Activated T-helper 1 cell treated with anti-CD3 and anti-CD28 coated beads, Interleukin-12 subunit alpha, Interleukin-12 subunit beta, Interleukin-2, Interleukin-4 antibody, amounts not matched to agents 30 ng/mL and 10 ng/mL and 1 ng/mL, durations not matched to agents 14 hours and 24 hours and 36 hours (primary cell): ENCODE measurements at regions of chr9 and their contacts with region 1.

Region 1: GRCh38 chr9:7387840-7388239 is 411.7 kb downstream of the DMAC1 start:
- DNase-seq: no peak
- H3K4me3 Mint-ChIP-seq: no peak overlapping the region
- H3K27ac Mint-ChIP-seq: no peak overlapping the region
- H3K4me1 Mint-ChIP-seq: no peaks in the 10 kb centered on the region
- H3K27me3 Mint-ChIP-seq: peaks cover 4% of the 10 kb centered on the region

Region 2: GRCh38 chr9:7443541-7443940 is 55.7 kb after region 1 on chr9:
- intact Hi-C with region 1: loop called (anchors 10 kb)
- DNase-seq: no peak
- H3K4me3 Mint-ChIP-seq: no peak overlapping the region
- H3K27ac Mint-ChIP-seq: no peak overlapping the region
- H3K4me1 Mint-ChIP-seq: no peaks in the 10 kb centered on the region
- H3K27me3 Mint-ChIP-seq: no peaks in the 10 kb centered on the region